WTC11 (cell line): ENCODE measurements at regions of chr19 and their contacts with region 1.

Region 1: DNA sequence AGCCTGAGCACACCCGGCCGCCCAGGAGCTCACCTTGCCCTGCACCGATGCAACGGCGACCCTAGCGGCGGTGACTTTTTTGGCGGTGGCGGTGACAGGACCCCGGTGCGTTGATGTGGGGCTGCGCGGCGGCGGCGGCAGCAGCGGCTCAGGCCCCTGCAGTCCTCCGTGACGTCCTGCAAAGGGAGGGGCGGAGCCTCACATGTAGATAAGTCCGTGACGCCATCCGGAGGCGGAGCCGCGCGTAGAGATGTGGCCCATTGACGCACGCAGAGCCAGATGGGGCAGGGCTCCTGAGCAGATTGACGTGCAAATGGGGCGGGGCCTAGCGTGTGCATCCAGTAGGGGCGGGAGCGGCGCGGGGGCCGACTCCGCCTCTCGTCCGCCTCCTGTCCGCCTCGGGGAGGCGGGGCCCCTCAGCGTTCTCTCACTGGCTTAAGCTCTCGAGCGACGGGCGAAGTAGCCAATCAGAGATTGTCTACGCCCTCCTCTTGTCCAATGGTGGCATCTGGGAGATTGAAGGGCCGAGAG is at the start of gene RAB3A:
- DNase-seq: peak; percentile 100
- ATAC-seq: peak; percentile 91
- H3K4me3 Mint-ChIP-seq: peak within 1 kb of the TSS; percentile 95
- H3K27ac Mint-ChIP-seq: peak within 1 kb of the TSS; percentile 99
- H3K4me1 Mint-ChIP-seq: peaks cover 22% of the 10 kb centered on the region
- H3K27me3 Mint-ChIP-seq: no peaks in the 10 kb centered on the region
- CTCF ChIP-seq: no peak
- total RNA-seq, gene RAB3A: 12.2 to 14.7 TPM (median 14.6 TPM) in 3 replicates

Region 2: GRCh38 chr19:18224525-18225354 is 20.8 kb after region 1 on chr19:
- CTCF ChIA-PET with region 1: interaction called, 50 read pairs
- POLR2A ChIA-PET with region 1: interaction called, 21 read pairs
- DNase-seq: peak; percentile 100
- ATAC-seq: peak; percentile 91
- H3K4me3 Mint-ChIP-seq: peak overlapping the region; percentile 92
- H3K27ac Mint-ChIP-seq: peak overlapping the region; percentile 100
- H3K4me1 Mint-ChIP-seq: peaks cover 30% of the 10 kb centered on the region
- H3K27me3 Mint-ChIP-seq: peaks cover 42% of the 10 kb centered on the region
- CTCF ChIP-seq: no peak

Region 3: GRCh38 chr19:18239303-18239702 is 35.4 kb after region 1 on chr19:
- CTCF ChIA-PET with region 1: interaction called, 77 read pairs
- POLR2A ChIA-PET with region 1: no interaction called
- DNase-seq: peak; percentile 57
- ATAC-seq: no peak; the same call in 1 of the 2 replicates
- H3K4me3 Mint-ChIP-seq: no peak overlapping the region
- H3K27ac Mint-ChIP-seq: no peak overlapping the region
- H3K4me1 Mint-ChIP-seq: peaks cover 5% of the 10 kb centered on the region; the same call in 1 of the 2 replicates
- H3K27me3 Mint-ChIP-seq: peaks cover 18% of the 10 kb centered on the region
- CTCF ChIP-seq: no peak

Region 4: DNA sequence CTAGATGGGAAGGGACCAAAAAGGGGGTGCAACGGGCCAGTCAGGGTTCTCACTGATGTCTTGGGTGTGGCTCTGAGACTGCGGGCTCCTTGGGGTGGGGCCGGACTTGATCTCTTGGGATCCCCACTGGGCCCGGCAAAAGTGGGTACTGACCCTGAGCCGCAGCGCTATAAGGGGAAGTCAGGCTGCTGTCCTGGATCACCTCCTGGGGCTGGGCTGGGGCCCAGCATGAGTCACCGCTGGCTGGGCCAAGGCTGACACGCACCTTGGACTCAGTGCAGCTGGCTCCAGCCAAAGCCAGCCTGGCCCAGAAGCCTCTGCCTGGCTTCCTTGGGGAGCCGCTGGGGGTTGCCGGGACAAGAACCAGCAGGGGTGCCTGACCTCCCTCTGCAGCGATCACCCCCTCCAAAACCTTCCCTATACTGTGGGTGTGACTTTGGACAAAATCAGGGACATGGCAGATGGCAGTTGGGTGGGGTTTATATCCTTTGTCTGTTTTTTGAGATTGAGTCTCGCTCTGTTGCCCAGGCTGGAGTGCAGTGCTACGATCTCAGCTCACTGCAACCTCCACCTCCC is 70.9 kb after region 1 on chr19:
- CTCF ChIA-PET with region 1: interaction called, 57 read pairs
- POLR2A ChIA-PET with region 1: interaction called, 34 read pairs
- DNase-seq: no peak
- ATAC-seq: no peak
- H3K4me3 Mint-ChIP-seq: no peak overlapping the region
- H3K27ac Mint-ChIP-seq: peak overlapping the region; percentile 53; the same call in 1 of the 2 replicates
- H3K4me1 Mint-ChIP-seq: peaks cover 19% of the 10 kb centered on the region
- H3K27me3 Mint-ChIP-seq: peaks cover 11% of the 10 kb centered on the region
- CTCF ChIP-seq: no peak